ENCODE measurements at regions of chr9 and their contacts with region 1.

Region 1: GRCh38 chr9:69923972-69924371 is 103.4 kb downstream of the CFAP95 start:
- DNase-seq: no peak
- H3K4me3 ChIP-seq: no peak overlapping the region
- H3K27ac ChIP-seq: no peak overlapping the region
- H3K4me1 ChIP-seq: no peaks in the 10 kb centered on the region
- H3K27me3 ChIP-seq: no peaks in the 10 kb centered on the region
- CTCF ChIP-seq: no peak
- POLR2A ChIP-seq: no peak

Region 2: GRCh38 chr9:69223605-69224004 is 700.4 kb before region 1 on chr9:
- intact Hi-C with region 1: loop called (anchors 5 kb)
- DNase-seq: no peak
- H3K4me3 ChIP-seq: no peak overlapping the region
- H3K27ac ChIP-seq: no peak overlapping the region
- H3K4me1 ChIP-seq: no peaks in the 10 kb centered on the region
- H3K27me3 ChIP-seq: no peaks in the 10 kb centered on the region
- CTCF ChIP-seq: peak; percentile 39 to 54 (median 54)
- POLR2A ChIP-seq: no peak

Region 3: GRCh38 chr9:69981686-69982450 is 57.9 kb after region 1 on chr9:
- intact Hi-C with region 1: loop called (anchors 2 kb)
- DNase-seq: no peak
- H3K4me3 ChIP-seq: no peak overlapping the region
- H3K27ac ChIP-seq: peak overlapping the region in 1 of 2 donors; percentile 3
- H3K4me1 ChIP-seq: no peaks in the 10 kb centered on the region
- H3K27me3 ChIP-seq: no peaks in the 10 kb centered on the region
- CTCF ChIP-seq: no peak
- POLR2A ChIP-seq: no peak